ENCODE measurements at regions of chr7 and their contacts with region 1.

Region 1: GRCh38 chr7:74535951-74536356 is 82.2 kb downstream of the GTF2IRD1 start:
- DNase-seq: no peak
- ATAC-seq: no peak

Region 2: GRCh38 chr7:74388880-74389415 is 147.0 kb before region 1 on chr7:
- intact Hi-C with region 1: no loop called
- DNase-seq: no peak
- ATAC-seq: no peak

Region 3: DNA sequence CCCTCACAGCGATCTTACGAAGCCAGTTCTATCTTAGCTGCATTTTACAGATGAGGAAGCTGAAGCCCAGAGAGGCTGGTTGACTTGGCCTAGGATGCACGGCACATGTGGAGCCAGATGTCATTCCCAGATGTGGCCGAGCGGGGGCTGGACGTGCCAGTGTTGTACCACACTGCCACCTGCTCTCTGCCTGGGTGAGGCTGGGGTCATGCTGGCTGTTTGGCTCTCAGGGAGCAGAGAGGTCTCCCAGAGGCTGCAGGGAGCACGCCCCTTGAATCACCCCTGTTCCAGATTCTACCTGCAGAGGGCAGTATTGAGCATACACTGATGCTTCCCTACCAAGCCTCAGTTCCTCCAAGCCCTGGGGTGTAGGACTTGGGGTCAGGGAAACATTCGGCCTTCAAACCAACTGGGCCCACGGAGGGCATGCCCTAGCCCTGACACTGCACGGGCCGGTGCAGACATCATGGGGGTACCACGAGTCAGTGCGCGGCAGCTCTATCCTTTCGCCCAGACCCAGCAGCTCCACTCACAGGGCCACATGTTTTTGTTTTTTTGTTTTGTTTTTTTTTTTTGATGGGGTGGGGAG is 86.1 kb before region 1 on chr7:
- intact Hi-C with region 1: loop called (anchors 10 kb)
- DNase-seq: peak; percentile 68
- ATAC-seq: no peak

Region 4: GRCh38 chr7:74665296-74665938 is 129.5 kb after region 1 on chr7:
- intact Hi-C with region 1: no loop called
- DNase-seq: no peak
- ATAC-seq: no peak

Region 5: DNA sequence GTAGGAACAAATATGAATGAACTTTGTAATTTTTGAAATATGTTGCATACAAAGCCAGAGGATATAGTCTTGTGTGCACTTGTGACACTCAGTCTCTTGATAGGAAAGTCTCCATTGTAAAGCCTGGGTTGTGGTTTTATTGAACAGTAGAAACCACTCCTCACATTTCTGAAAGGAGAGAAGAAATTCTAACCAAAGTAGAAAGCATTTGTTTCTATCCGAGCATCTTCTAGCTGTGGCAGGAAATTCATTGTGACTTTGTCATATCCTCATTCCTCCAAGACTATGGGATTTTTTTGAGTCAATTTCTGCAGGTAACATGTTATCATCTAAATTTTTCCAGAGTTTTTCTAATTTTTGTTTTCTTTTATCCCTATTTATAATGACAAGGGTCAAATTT is 182.4 kb after region 1 on chr7:
- intact Hi-C with region 1: no loop called
- DNase-seq: no peak
- ATAC-seq: no peak

Measured in sciatic nerve (tissue), 2 donors.